ENCODE measurements at regions of chr15 and their contacts with region 1.

Region 1: GRCh38 chr15:92077353-92078085 is 224.0 kb downstream of the SLCO3A1 start:
- DNase-seq: peak; percentile 81
- ATAC-seq: peak; percentile 82
- H3K4me3 Mint-ChIP-seq: no peak overlapping the region
- H3K27ac Mint-ChIP-seq: no peak overlapping the region
- H3K4me1 Mint-ChIP-seq: peaks cover 13% of the 10 kb centered on the region
- H3K27me3 Mint-ChIP-seq: peaks cover 2% of the 10 kb centered on the region; the same call in 1 of the 2 replicates
- CTCF ChIP-seq: peak; percentile 43

Region 2: GRCh38 chr15:91852741-91853510 is 224.6 kb before region 1 on chr15:
- CTCF ChIA-PET with region 1: interaction called, 44 read pairs
- POLR2A ChIA-PET with region 1: interaction called, 4 read pairs
- DNase-seq: peak; percentile 69
- ATAC-seq: peak; percentile 62
- H3K4me3 Mint-ChIP-seq: peak overlapping the region; percentile 71
- H3K27ac Mint-ChIP-seq: no peak overlapping the region
- H3K4me1 Mint-ChIP-seq: peaks cover 40% of the 10 kb centered on the region
- H3K27me3 Mint-ChIP-seq: peaks cover 24% of the 10 kb centered on the region
- CTCF ChIP-seq: peak; percentile 85

Region 3: GRCh38 chr15:91867581-91868026 is 209.9 kb before region 1 on chr15:
- CTCF ChIA-PET with region 1: interaction called, 11 read pairs
- POLR2A ChIA-PET with region 1: no interaction called
- DNase-seq: peak; percentile 28
- ATAC-seq: peak; percentile 81
- H3K4me3 Mint-ChIP-seq: no peak overlapping the region
- H3K27ac Mint-ChIP-seq: no peak overlapping the region
- H3K4me1 Mint-ChIP-seq: peaks cover 34% of the 10 kb centered on the region
- H3K27me3 Mint-ChIP-seq: no peaks in the 10 kb centered on the region
- CTCF ChIP-seq: no peak

Region 4: DNA sequence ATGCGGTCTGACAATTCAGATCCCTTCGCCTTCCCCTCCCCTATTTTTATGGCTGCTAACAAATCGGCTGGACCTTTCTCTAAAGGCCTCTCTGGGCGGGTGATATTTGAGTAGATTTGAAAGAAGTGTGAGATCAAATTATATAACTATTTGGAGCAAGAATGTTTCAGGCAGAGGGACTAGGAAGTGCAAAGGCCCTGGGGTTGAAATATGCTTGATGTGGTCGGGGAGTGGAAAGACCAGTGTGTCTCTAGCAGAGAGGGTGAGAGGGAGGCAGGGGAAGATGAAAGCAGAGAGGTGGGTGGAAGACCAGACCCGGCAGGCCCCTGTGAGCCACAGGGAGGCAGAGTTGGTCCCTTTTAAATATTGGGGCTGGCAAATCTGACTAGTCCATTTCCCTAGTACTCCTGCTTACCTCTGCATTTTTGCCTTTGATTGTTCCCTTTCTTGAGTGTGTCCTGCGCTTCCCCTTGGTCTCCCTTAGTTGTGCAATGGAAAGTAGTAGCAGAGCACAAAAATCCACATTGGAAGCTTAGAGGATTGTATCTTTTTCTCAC is 191.7 kb before region 1 on chr15:
- CTCF ChIA-PET with region 1: interaction called, 14 read pairs
- POLR2A ChIA-PET with region 1: no interaction called
- DNase-seq: no peak
- ATAC-seq: peak; percentile 34
- H3K4me3 Mint-ChIP-seq: no peak overlapping the region
- H3K27ac Mint-ChIP-seq: no peak overlapping the region
- H3K4me1 Mint-ChIP-seq: peaks cover 56% of the 10 kb centered on the region
- H3K27me3 Mint-ChIP-seq: no peaks in the 10 kb centered on the region
- CTCF ChIP-seq: no peak

Region 5: GRCh38 chr15:91947683-91948608 is 129.6 kb before region 1 on chr15:
- CTCF ChIA-PET with region 1: interaction called, 20 read pairs
- POLR2A ChIA-PET with region 1: no interaction called
- DNase-seq: peak; percentile 37
- ATAC-seq: peak; percentile 63
- H3K4me3 Mint-ChIP-seq: peak overlapping the region; percentile 8; the same call in 1 of the 2 replicates
- H3K27ac Mint-ChIP-seq: peak overlapping the region; percentile 85
- H3K4me1 Mint-ChIP-seq: peaks cover 60% of the 10 kb centered on the region
- H3K27me3 Mint-ChIP-seq: no peaks in the 10 kb centered on the region
- CTCF ChIP-seq: no peak

Region 6: DNA sequence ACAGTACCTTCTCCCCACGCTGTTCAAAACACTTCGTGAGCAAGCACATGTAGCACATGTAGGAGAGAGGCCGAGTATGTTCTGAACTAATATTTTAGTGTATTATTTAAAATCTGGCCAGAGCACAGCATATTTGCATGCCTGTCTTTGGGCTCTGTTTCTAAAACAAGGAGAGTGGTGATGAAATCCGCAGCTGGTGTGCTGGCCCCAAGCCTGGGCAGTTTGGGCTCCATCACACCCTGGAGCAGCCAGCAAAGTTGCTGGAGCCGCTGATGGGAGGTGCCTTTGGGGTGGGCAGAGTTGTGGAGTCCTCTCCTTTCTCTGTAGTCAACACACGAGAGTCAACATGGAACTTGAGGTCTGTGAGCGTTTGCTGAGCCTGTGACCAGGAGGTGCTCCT is 107.4 kb before region 1 on chr15:
- CTCF ChIA-PET with region 1: interaction called, 23 read pairs
- POLR2A ChIA-PET with region 1: no interaction called
- DNase-seq: no peak
- ATAC-seq: no peak
- H3K4me3 Mint-ChIP-seq: no peak overlapping the region
- H3K27ac Mint-ChIP-seq: no peak overlapping the region
- H3K4me1 Mint-ChIP-seq: peaks cover 19% of the 10 kb centered on the region
- H3K27me3 Mint-ChIP-seq: no peaks in the 10 kb centered on the region
- CTCF ChIP-seq: no peak

Region 7: GRCh38 chr15:92091155-92091734 is 13.7 kb after region 1 on chr15:
- CTCF ChIA-PET with region 1: interaction called, 10 read pairs
- POLR2A ChIA-PET with region 1: no interaction called
- DNase-seq: peak; percentile 91
- ATAC-seq: peak; percentile 96
- H3K4me3 Mint-ChIP-seq: no peak overlapping the region
- H3K27ac Mint-ChIP-seq: no peak overlapping the region
- H3K4me1 Mint-ChIP-seq: peaks cover 14% of the 10 kb centered on the region
- H3K27me3 Mint-ChIP-seq: no peaks in the 10 kb centered on the region
- CTCF ChIP-seq: peak; percentile 68